Heart left ventricle (tissue), 16 donors: ENCODE measurements at regions of chr15 and their contacts with region 1.

Region 1: DNA sequence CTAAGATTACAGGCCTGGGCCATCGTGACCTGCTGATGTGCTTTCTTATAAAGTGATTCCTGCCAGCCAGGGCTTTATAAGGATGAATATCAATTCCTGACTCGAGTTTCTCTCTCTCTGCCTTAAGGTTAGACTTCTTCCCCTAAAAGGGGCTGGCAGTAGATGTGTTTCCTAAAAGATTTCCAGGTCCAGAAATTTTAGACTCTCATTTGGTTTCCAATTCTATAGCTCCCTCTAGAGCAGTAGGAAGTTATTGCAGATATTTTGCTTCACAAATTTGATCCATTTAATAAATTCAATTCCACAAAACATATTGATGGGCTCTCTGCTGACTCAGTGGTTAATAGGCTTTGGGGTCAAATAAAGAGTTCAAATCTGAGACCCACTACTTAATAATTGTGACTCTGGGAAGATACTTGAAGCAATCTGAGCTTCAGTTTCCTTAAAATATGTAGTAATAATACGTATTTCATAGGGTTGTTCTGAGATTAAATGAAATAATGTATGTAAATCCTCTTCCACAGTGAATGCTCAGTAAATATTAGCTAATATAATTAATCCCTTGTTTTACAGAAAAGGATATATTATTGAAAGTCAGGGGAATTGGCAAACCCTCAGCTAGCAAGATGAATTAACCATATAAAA is 2.1 kb downstream of the TRIM69 start:
- DNase-seq: no peak
- ATAC-seq: peak in 1 of 4 donors; percentile 47
- H3K4me3 ChIP-seq: no peak overlapping the region
- H3K27ac ChIP-seq: no peak overlapping the region
- H3K4me1 ChIP-seq: peaks cover 0 to 48% (median 8%) of the 10 kb centered on the region in 12 donors
- H3K27me3 ChIP-seq: no peaks in the 10 kb centered on the region
- CTCF ChIP-seq: peak; percentile 54 to 85 (median 75)
- POLR2A ChIP-seq: no peak

Region 2: DNA sequence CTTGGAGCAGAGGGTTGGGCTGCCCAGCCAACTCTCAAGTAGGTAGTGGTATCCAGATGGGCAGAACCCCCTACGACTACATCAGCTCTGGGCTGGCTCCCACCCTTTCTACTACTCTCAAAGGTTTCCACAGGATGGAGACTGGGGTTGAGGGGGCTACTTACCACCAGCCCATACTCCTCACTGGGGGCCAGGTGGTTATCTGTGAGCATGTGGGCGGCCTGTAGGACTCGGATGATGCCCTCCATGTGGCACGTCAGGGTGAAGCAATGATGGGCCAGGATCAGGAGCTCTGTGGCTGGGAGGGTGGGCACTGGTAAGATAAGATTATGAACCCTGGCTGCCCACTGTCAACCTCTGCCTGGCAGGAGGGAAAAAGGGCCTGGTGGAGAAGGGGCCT is 168.1 kb before region 1 on chr15:
- intact Hi-C with region 1: loop called in 2 of 10 experiments (anchors 5 to 10 kb)
- DNase-seq: no peak
- ATAC-seq: peak in 2 of 4 donors; percentile 7 to 30
- H3K4me3 ChIP-seq: no peak overlapping the region
- H3K27ac ChIP-seq: no peak overlapping the region
- H3K4me1 ChIP-seq: peaks cover 0 to 9% (median 0%) of the 10 kb centered on the region in 12 donors
- H3K27me3 ChIP-seq: no peaks in the 10 kb centered on the region
- CTCF ChIP-seq: no peak
- POLR2A ChIP-seq: no peak

Region 3: DNA sequence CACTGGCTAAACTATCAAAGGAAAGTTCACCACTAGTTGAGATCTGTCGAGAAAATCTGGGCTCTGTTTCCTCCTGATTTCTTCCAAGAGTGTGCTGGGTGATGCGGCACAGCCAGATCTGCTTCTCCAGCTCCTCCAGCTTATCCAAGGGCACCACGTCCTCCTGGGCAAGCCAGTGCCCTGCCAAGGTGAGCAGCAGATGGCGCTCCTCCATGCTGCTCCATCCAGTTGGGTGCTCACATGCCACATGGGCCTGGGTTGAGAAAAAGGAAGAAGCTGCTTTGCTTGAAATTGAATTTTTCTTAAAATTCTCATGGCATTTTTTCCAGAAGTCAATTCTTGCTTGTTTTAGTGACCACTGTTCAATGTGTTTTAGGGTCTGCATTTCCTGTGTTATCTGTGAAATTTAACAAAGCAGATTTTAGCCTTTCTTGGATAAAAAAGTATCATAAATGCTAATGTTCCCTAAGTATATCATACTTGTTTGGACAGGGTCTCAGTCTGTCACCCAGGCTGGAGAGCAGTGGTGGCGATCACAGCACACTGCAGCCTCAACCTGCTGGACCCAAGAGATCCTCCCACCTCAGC is 154.2 kb before region 1 on chr15:
- intact Hi-C with region 1: loop called in 5 of 10 experiments (anchors 5 to 10 kb)
- DNase-seq: peak in 3 of 5 donors; percentile 20 to 52 (median 46)
- ATAC-seq: peak in 3 of 4 donors; percentile 66 to 78 (median 69)
- H3K4me3 ChIP-seq: no peak overlapping the region
- H3K27ac ChIP-seq: no peak overlapping the region
- H3K4me1 ChIP-seq: no peaks in the 10 kb centered on the region
- H3K27me3 ChIP-seq: no peaks in the 10 kb centered on the region
- CTCF ChIP-seq: peak in 7 of 12 donors; percentile 27 to 55 (median 40)
- POLR2A ChIP-seq: no peak

Region 4: DNA sequence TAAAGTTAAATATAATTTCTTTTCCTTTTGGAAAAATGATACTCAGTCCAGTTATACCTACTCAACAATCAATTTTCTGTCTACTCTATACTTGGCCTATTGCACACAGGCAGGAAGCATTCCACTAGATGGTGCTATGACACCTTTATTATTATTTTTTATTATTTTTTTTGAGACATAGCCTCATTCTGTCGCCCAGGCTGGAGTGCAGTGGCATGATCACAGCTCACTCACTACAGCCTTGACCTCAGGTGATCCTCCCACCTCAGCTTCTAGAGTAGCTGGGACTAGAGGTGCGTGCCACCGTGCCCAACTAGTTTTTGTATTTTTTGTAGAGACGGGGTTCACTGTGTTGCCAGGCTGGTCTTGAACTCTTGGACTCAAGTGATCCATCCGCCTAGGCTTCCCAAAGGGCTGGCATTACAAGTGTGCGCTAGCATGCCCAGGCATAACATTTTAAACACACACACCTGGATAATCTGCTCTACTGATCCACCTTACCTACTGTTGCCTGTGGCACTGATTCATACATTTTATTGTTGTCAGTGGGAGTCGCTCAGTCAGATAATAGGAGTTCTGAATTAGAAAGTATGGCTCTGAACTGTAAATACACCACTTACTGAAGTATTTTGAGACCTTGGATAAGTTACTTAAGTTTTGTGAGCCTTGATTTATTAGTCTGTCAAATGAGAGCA is 145.3 kb before region 1 on chr15:
- intact Hi-C with region 1: loop called in 6 of 10 experiments (anchors 5 to 10 kb)
- DNase-seq: no peak
- ATAC-seq: no peak
- H3K4me3 ChIP-seq: no peak overlapping the region
- H3K27ac ChIP-seq: no peak overlapping the region
- H3K4me1 ChIP-seq: no peaks in the 10 kb centered on the region
- H3K27me3 ChIP-seq: no peaks in the 10 kb centered on the region
- CTCF ChIP-seq: peak in 9 of 12 donors; percentile 26 to 48 (median 34)
- POLR2A ChIP-seq: no peak

Region 5: GRCh38 chr15:44616974-44617373 is 121.5 kb before region 1 on chr15:
- intact Hi-C with region 1: no loop called
- DNase-seq: no peak
- ATAC-seq: peak; percentile 47 to 64 (median 53)
- H3K4me3 ChIP-seq: no peak overlapping the region
- H3K27ac ChIP-seq: no peak overlapping the region
- H3K4me1 ChIP-seq: no peaks in the 10 kb centered on the region
- H3K27me3 ChIP-seq: no peaks in the 10 kb centered on the region
- CTCF ChIP-seq: no peak
- POLR2A ChIP-seq: no peak

Region 6: GRCh38 chr15:44663409-44664308 is 74.8 kb before region 1 on chr15 and contains the start of gene SPG11:
- intact Hi-C with region 1: loop called (anchors 1 to 5 kb)
- DNase-seq: peak; percentile 98 to 99 (median 99)
- ATAC-seq: peak; percentile 98 to 99 (median 98)
- H3K4me3 ChIP-seq: peak within 1 kb of the TSS; percentile 69 to 99 (median 93)
- H3K27ac ChIP-seq: peak within 1 kb of the TSS; percentile 91 to 99 (median 97)
- H3K4me1 ChIP-seq: peaks cover 0 to 49% (median 15%) of the 10 kb centered on the region in 12 donors
- H3K27me3 ChIP-seq: no peaks in the 10 kb centered on the region
- CTCF ChIP-seq: peak; percentile 92 to 98 (median 96)
- POLR2A ChIP-seq: peak in 1 of 2 donors; percentile 88
- total RNA-seq, gene SPG11: 35.4 to 69.4 (median 48.8) TPM

Region 7: GRCh38 chr15:44711356-44712107 is 26.9 kb before region 1 on chr15 and contains the start of gene B2M:
- intact Hi-C with region 1: loop called in 1 of 10 experiments (anchors 2 kb)
- DNase-seq: peak; percentile 93 to 97 (median 96)
- ATAC-seq: peak; percentile 96 to 97 (median 96)
- H3K4me3 ChIP-seq: peak within 1 kb of the TSS; percentile 74 to 95 (median 86)
- H3K27ac ChIP-seq: peak within 1 kb of the TSS; percentile 94 to 100 (median 99)
- H3K4me1 ChIP-seq: peaks cover 0 to 47% (median 21%) of the 10 kb centered on the region in 12 donors
- H3K27me3 ChIP-seq: no peaks in the 10 kb centered on the region
- CTCF ChIP-seq: no peak
- POLR2A ChIP-seq: peak; percentile 95 to 99
- total RNA-seq, gene B2M: 1,033 to 5,448 (median 1,200) TPM